Activated CD4-positive, alpha-beta T cell treated with anti-CD3 and anti-CD28 coated beads, Interleukin-2, amount 10 ng/mL, durations not matched to agents 24 days and 14 days (primary cell): ENCODE measurements at regions of chr1 and their contacts with region 1.

Region 1: GRCh38 chr1:31931593-31932225 is 6.5 kb downstream of the PTP4A2 start:
- DNase-seq: no peak
- H3K4me3 Mint-ChIP-seq: peak overlapping the region; percentile 95
- H3K27ac Mint-ChIP-seq: peak overlapping the region; percentile 93
- H3K4me1 Mint-ChIP-seq: peaks cover 76% of the 10 kb centered on the region
- H3K27me3 Mint-ChIP-seq: no peaks in the 10 kb centered on the region

Region 2: DNA sequence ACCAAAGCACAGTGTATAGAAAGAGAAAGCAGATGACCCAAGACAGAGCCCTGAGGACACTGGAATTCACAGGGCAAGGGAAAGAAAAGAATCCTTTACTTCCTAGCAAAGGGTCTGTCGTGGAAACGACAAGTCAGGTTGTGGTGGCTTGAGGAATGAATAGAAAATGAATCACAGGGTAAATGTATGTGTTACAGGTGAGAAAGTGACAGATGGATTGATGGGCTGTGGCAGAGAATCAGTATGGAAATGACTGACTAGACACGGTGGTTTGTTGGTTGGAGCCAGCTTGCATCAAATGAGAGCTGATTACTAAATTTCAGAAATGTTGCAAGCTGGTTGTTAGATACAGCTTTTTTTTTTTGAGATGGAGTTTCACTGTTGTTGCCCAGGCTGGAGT is 40.4 kb before region 1 on chr1:
- intact Hi-C with region 1: loop called (anchors 1 kb)
- DNase-seq: peak; percentile 71
- H3K4me3 Mint-ChIP-seq: peak overlapping the region; percentile 7
- H3K27ac Mint-ChIP-seq: peak overlapping the region; percentile 75
- H3K4me1 Mint-ChIP-seq: peaks cover 23% of the 10 kb centered on the region
- H3K27me3 Mint-ChIP-seq: no peaks in the 10 kb centered on the region

Region 3: DNA sequence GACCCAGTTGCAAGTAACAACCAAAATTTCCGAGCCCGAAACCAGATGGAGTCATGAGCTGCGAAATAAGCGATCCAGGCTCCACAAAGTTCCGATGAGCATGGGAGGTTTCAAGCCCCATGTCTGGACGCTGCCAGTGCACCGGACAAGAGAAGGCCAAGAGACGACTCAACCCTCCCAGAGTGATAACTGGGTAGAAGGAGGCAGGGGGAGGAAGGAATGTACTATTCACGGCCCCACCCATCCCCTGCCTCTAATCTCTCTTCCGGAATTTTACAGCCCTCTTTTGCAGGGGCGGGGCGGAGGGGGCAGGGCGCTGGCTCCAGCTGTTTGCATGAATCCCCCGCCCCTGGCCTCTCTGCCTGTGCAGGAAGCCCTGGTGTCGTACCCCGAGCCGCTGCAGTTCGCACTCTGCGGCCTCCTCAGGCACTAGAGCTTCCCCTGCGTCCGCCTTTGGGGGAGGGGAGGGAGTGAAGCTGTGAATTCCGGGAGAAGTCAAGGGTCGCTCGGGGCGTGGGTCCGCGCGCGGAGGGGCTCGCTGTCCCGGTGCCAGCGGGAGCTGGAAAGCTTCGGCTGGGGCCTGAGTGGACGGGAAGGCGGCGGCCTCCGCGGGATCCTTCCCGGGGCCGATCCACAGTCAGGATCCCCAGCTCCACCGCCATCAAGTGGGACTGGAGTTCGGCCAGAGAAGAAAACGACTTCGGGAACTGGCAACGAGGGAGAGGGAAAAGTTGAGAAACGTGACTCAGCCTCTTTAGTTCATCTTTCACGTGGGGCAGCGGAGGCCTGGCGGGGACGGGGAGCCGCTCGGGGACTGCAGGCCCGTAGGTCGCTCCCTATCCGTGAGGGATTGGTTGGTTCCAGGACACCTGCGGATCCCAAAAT is 12.7 kb after region 1 on chr1:
- intact Hi-C with region 1: loop called (anchors 1 kb)
- DNase-seq: peak; percentile 97
- H3K4me3 Mint-ChIP-seq: peak overlapping the region; percentile 77
- H3K27ac Mint-ChIP-seq: peak overlapping the region; percentile 92
- H3K4me1 Mint-ChIP-seq: peaks cover 46% of the 10 kb centered on the region
- H3K27me3 Mint-ChIP-seq: no peaks in the 10 kb centered on the region